Common myeloid progenitor, CD34-positive (primary cell): ENCODE measurements at regions of chr11 and their contacts with region 1.

Region 1: GRCh38 chr11:94183886-94184264 is 55.2 kb downstream of the PANX1 start:
- DNase-seq: peak; percentile 55 to 68 (median 66)
- H3K4me3 ChIP-seq: peak overlapping the region in 1 of 7 experiments; percentile 51
- H3K27ac ChIP-seq: no peak overlapping the region
- H3K4me1 ChIP-seq: peaks cover 0 to 11% (median 0%) of the 10 kb centered on the region in 4 experiments
- H3K27me3 ChIP-seq: no peaks in the 10 kb centered on the region

Region 2: DNA sequence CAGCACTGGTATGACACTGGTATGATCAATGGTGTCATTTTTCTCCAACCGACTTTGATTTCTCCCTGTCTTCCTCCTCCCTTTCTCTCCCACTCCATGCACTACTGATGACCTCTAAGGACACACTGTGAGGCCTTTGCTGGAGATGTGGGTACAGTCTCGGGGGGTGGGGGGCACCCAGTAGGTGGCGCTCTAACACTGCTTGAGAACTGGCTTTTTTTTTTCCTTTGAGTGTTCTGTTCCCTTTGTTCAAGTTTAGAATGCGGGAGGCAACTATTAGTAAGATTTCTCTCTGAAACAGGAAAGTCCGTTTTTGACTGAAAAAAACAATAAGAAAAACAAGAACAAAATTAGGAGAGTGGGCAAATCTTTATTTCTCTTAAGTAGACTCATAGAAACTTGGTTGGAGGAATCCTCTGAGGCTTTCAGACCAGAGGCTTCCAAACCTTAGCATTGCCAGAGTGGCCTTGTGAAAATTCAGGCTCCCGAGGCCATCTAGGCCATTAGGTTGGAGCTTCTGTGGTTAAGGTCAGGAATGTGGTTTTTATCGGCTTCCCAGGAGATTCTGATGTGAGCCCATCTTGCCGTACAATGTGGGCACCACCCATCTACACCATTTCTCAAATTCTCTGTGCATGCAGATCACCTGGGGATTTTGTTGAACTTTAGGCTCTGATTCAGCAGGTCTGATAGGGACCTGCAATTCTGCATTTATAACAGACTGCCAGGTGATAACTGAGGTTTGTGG is 12.0 kb before region 1 on chr11:
- CTCF ChIA-PET with region 1: interaction called, 43 read pairs
- POLR2A ChIA-PET with region 1: no interaction called
- DNase-seq: peak; percentile 40 to 56 (median 55)
- H3K4me3 ChIP-seq: no peak overlapping the region
- H3K27ac ChIP-seq: no peak overlapping the region
- H3K4me1 ChIP-seq: no peaks in the 10 kb centered on the region
- H3K27me3 ChIP-seq: no peaks in the 10 kb centered on the region

Region 3: GRCh38 chr11:94224078-94224477 is 40.2 kb after region 1 on chr11:
- CTCF ChIA-PET with region 1: no interaction called
- POLR2A ChIA-PET with region 1: no interaction called
- DNase-seq: peak; percentile 13 to 65 (median 37)
- H3K4me3 ChIP-seq: no peak overlapping the region
- H3K27ac ChIP-seq: no peak overlapping the region
- H3K4me1 ChIP-seq: peaks cover 0 to 2% (median 0%) of the 10 kb centered on the region in 4 experiments
- H3K27me3 ChIP-seq: no peaks in the 10 kb centered on the region

Region 4: DNA sequence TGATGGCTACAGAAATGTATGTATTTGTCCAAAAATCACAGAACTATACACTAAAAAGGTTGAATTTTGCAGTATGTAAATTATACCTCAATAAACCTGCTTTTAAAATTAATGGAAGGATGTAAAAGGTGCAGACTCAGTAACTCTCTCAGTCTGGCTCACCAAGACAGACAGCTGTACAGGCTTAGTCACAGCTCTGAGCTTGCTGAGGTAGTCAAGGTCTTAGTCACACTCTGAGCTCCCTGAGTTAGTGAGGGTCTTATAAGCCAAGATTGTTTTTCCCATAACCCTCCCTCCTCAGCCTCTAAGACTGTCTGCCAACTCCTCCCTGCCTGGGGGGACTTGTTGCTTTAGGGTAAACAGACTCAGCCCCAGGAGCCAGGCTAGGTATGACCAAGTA is 61.2 kb after region 1 on chr11:
- CTCF ChIA-PET with region 1: no interaction called
- POLR2A ChIA-PET with region 1: no interaction called
- DNase-seq: no peak
- H3K4me3 ChIP-seq: no peak overlapping the region
- H3K27ac ChIP-seq: no peak overlapping the region
- H3K4me1 ChIP-seq: no peaks in the 10 kb centered on the region
- H3K27me3 ChIP-seq: no peaks in the 10 kb centered on the region

Region 5: DNA sequence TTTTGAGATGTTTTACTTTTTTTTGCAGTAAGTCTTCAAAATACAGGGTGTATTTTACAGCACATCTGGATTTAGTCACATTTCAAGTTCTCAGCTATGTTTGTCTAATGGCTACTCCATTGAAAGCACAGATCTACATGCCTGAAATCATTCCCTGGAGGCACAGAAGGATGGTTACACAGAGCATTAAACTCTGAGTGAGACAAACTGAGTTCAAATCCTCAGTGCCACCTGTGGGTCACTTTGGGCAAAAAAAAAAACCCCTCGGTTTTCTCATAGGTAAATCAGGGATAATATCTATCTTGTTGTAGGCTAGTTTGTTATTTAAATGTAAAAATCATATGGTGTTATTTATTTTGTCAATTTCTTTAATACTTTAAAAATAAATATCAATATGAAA is 317.6 kb after region 1 on chr11:
- CTCF ChIA-PET with region 1: interaction called, 14 read pairs
- POLR2A ChIA-PET with region 1: no interaction called
- DNase-seq: no peak
- H3K4me3 ChIP-seq: no peak overlapping the region
- H3K27ac ChIP-seq: no peak overlapping the region
- H3K4me1 ChIP-seq: no peaks in the 10 kb centered on the region
- H3K27me3 ChIP-seq: no peaks in the 10 kb centered on the region